ENCODE measurements at regions of chr6 and their contacts with region 1.

Region 1: GRCh38 chr6:31366693-31367470 is 9.9 kb upstream of the HLA-B start:
- DNase-seq: peak; percentile 92
- ATAC-seq: peak; percentile 100
- H3K4me3 Mint-ChIP-seq: peak overlapping the region; percentile 66
- H3K27ac Mint-ChIP-seq: no peak overlapping the region
- H3K4me1 Mint-ChIP-seq: peaks cover 13% of the 10 kb centered on the region
- H3K27me3 Mint-ChIP-seq: peaks cover 73% of the 10 kb centered on the region

Region 2: GRCh38 chr6:30730601-30731435 is 636.1 kb before region 1 on chr6:
- CTCF ChIA-PET with region 1: no interaction called
- DNase-seq: peak; percentile 91
- ATAC-seq: peak; percentile 94
- H3K4me3 Mint-ChIP-seq: no peak overlapping the region
- H3K27ac Mint-ChIP-seq: peak overlapping the region; percentile 61
- H3K4me1 Mint-ChIP-seq: peaks cover 38% of the 10 kb centered on the region
- H3K27me3 Mint-ChIP-seq: no peaks in the 10 kb centered on the region

Region 3: GRCh38 chr6:31139599-31139998 is 227.3 kb before region 1 on chr6:
- CTCF ChIA-PET with region 1: interaction called, 39 read pairs
- DNase-seq: no peak
- ATAC-seq: no peak
- H3K4me3 Mint-ChIP-seq: no peak overlapping the region
- H3K27ac Mint-ChIP-seq: no peak overlapping the region
- H3K4me1 Mint-ChIP-seq: peaks cover 4% of the 10 kb centered on the region
- H3K27me3 Mint-ChIP-seq: no peaks in the 10 kb centered on the region

Region 4: GRCh38 chr6:31158140-31158862 is 208.6 kb before region 1 on chr6 and contains the start of gene TCF19:
- CTCF ChIA-PET with region 1: interaction called, 21 read pairs
- DNase-seq: peak; percentile 100
- ATAC-seq: peak; percentile 92
- H3K4me3 Mint-ChIP-seq: peak within 1 kb of the TSS; percentile 99
- H3K27ac Mint-ChIP-seq: peak within 1 kb of the TSS; percentile 84
- H3K4me1 Mint-ChIP-seq: peaks cover 42% of the 10 kb centered on the region
- H3K27me3 Mint-ChIP-seq: no peaks in the 10 kb centered on the region
- total RNA-seq, gene TCF19: 100 to 106 TPM

Region 5: DNA sequence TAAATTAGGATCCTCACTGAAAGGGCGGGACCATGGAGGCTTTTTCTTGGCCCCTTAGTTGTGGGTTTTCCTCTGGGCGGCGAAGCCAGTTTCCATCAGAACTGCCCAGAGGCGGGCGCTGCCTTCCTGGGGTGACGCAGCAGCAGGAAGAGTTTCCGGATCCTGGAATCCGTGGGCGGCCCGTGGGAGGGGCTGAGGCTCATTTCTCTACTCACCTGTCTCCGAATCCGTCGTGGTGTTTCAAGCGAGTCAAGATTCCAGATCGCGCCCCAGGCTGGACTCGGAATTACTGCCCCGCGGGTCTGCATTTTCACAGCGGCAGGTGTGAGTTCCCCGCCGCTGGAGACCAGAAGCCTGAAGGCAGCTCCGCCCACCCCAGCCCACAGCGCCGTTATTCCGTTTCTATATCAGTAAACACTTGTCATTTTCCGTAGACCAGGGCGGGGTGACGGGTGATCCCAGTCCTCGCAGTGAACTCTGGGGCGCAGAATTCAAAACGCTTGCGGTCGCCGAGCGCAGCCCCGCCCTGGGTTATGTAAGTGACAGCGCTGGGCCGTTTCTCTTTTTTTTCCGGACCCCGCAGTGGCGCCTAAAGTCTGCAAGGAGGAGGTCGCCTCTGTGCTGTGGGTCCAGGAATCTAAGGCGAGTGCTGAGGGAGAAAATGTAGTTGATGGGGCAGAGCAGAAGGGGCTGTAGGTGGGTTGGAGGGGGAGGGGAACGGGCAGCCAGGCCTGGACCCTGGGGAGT is 169.2 kb before region 1 on chr6:
- CTCF ChIA-PET with region 1: interaction called, 63 read pairs
- DNase-seq: peak; percentile 98
- ATAC-seq: peak; percentile 78
- H3K4me3 Mint-ChIP-seq: peak overlapping the region; percentile 75
- H3K27ac Mint-ChIP-seq: peak overlapping the region; percentile 99
- H3K4me1 Mint-ChIP-seq: peaks cover 50% of the 10 kb centered on the region
- H3K27me3 Mint-ChIP-seq: no peaks in the 10 kb centered on the region

Region 6: DNA sequence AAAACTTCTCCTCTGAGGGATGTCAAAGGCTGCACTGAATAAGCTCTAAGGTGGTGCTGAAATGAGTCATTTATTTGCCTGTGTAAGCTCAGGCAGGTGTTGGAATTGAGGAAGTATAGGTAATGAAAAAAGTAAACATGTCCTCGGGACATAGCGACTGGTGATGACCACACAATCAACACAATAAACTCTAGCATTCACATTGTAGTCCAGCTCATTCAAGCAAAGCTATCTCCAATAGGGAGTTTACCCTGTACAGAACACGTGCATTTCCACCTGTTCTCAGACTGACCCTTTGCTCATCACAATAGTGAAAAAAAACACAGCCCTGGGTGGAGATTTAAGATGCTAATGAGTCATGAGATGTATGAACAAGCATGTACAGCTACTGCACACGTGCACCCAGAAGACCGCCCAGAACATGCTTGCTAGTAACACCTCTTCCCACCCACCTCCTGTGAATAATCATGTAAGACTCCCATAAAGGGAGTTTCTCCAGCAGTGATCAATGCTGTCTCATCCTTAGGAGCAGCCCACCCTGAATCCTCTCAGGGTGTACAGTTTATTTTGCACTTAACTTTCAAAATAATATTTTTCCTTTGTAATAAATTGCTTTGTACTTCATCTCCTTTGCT is 163.4 kb before region 1 on chr6:
- CTCF ChIA-PET with region 1: interaction called, 63 read pairs
- DNase-seq: peak; percentile 71
- ATAC-seq: peak; percentile 69
- H3K4me3 Mint-ChIP-seq: peak overlapping the region; percentile 82
- H3K27ac Mint-ChIP-seq: peak overlapping the region; percentile 95
- H3K4me1 Mint-ChIP-seq: peaks cover 63% of the 10 kb centered on the region
- H3K27me3 Mint-ChIP-seq: no peaks in the 10 kb centered on the region

Region 7: GRCh38 chr6:31352683-31353383 is 14.0 kb before region 1 on chr6:
- CTCF ChIA-PET with region 1: interaction called, 12 read pairs
- DNase-seq: peak; percentile 51
- ATAC-seq: no peak
- H3K4me3 Mint-ChIP-seq: peak overlapping the region; percentile 99
- H3K27ac Mint-ChIP-seq: peak overlapping the region; percentile 61
- H3K4me1 Mint-ChIP-seq: peaks cover 43% of the 10 kb centered on the region
- H3K27me3 Mint-ChIP-seq: no peaks in the 10 kb centered on the region

Region 8: GRCh38 chr6:31378062-31378720 is 11.3 kb after region 1 on chr6:
- CTCF ChIA-PET with region 1: interaction called, 36 read pairs
- DNase-seq: no peak
- ATAC-seq: no peak
- H3K4me3 Mint-ChIP-seq: no peak overlapping the region
- H3K27ac Mint-ChIP-seq: no peak overlapping the region
- H3K4me1 Mint-ChIP-seq: no peaks in the 10 kb centered on the region
- H3K27me3 Mint-ChIP-seq: peaks cover 40% of the 10 kb centered on the region